Head of caudate nucleus (tissue), 42 donors: ENCODE measurements at regions of chr16 and their contacts with region 1.

Region 1: GRCh38 chr16:14186007-14186794 is 115.1 kb downstream of the MRTFB start:
- DNase-seq: peak; percentile 38 to 86 (median 62)

Region 2: GRCh38 chr16:13968835-13969234 is 217.4 kb before region 1 on chr16:
- intact Hi-C with region 1: no loop called
- DNase-seq: no peak

Region 3: DNA sequence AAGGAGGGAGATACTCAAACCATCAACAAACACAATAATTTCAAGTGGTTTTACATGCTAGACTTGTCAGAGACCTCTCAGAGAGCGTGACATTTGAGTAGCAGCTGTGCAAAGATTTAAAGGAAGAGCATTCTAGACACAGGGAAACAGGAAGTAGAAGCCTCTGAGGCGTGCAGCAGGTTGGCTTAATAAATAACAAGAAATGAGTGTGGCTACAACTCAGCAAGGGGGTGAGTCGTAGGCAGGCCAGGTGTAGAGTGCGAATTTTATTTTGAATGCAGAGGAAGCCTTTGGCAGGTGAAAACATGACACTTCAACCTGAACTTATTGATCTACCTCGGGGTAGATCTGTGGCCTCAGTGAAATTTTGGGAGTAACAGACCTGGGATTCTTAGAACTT is 188.3 kb before region 1 on chr16:
- intact Hi-C with region 1: no loop called
- DNase-seq: no peak

Region 4: DNA sequence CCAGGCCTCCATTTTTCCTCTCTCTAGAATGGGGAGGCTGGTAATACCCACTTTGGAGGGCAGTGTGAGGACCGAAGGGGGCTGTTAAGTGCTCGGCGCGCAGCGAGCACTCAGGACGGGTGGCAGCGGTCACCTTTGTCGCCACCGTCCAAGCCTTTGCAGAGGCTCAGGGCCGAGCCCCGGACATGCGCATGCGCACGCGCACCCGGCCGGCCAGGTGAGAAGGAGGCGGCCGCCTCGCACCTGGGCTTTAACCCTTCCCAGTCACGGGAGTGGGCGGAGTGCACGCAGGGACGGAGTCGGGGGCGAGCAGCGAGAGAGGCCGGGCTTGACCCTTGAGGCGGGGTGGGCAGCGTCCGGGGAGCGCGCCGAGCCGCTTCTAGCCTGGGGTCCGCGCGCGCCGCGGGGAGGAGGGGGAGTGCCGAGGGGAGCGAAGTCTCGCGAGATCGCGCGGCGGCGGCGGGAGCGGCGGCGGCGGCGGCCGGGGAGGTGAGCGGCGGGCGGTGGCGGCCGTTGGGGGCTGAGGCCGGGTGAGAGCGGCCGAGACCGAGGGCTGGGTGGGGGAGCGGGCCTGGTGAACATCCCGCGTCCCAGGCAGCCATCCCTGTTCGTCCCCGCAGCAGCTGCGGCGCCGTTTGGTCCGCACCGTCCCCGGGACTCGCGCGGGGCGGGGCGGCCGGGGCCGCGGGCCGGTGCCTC is 115.2 kb before region 1 on chr16 and contains the start of gene MRTFB:
- intact Hi-C with region 1: loop called (anchors 10 kb)
- DNase-seq: peak; percentile 14 to 84 (median 70)

Region 5: GRCh38 chr16:14140923-14141322 is 45.3 kb before region 1 on chr16:
- intact Hi-C with region 1: no loop called
- DNase-seq: peak in 28 of 42 donors; percentile 3 to 76 (median 32)

Region 6: DNA sequence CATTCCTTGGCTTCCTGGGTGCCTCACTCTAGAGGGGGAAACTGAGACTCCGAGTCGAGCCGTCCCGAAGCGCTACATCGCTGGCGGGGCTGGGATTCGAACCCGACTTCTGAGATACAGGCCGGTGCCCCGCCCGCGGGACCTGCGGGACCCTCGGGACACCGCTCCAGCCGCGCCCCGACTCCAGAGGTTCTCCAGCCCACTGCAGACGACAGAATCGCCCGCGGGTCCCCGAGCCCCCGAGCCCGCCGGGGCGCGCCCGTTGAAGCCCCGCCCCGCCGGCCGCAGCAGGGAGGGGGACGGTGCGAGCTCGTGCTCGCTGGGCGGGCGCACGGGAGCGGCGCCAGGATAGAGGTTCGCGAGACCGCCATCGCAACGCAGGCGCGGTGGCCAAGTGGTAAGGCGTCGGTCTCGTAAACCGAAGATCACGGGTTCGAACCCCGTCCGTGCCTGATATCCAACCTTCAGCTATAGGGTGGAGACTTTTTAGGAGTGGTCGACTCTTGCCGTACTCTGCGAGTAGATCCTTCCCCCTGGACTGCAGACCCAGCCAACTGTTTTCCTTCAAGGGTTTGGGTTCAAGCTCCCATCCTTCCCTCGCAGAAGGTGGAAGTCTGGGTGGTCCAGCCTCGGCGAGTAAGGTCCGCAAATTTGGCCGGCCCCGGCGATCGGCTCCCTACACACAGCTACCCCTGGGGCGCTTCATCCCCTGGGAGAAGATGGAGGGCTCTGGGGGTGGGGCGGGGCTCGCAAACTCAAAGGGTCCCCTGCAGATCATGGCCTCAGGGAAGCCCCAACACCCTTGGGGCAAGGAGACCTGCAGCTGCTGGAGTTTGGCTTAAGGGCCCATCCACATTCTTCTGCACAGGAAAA is 99.5 kb after region 1 on chr16:
- intact Hi-C with region 1: no loop called
- DNase-seq: peak; percentile 83 to 97 (median 93)